ENCODE measurements at regions of chr9 and their contacts with region 1.

Region 1: DNA sequence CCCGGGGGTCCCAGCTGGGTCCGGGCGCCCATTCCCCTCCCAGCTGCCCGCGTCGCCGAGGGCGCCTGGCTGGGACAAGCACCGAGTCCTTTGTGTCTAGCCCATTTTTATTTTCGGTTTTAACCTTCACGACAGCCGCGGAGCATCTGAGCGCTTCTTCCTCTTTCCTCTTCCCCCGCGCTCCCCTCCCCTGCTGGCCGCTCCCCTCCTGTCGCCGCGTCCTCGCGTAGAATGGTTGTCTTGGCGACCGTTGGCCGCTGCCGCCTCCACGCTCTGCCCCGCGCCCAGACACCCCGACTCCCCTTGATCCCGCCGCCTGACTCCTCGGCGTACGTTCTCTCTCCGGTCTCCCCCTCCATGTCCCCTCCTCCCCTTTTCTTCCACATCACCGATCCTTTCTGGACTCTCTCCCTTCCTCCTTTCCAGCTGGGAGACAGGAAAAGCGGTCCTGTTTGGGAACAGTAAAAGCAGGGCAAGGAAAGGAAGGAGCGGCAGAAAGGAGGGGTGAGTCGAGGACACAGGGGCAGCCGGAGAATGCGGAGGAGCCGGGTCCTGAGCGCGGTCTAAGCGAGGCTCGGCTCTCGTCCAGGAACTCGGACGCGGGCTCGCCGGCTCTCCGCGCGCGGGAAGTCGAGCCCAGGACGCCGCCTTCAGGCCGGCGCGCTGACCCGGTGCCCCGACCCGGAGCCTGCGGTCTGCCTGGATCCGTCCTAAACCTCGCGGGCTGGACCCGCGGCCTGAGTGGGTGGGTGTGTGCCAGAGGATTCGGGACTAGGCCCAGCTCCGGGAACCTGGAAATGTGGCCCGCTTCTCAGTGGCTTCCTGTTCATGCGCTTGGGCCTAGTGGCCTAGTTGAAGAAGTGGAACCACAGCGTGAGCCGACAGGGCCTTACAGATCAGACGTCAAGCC is 841 bp downstream of the CDKN2B-AS1 start:
- DNase-seq: peak; percentile 72
- H3K4me3 Mint-ChIP-seq: peak overlapping the region; percentile 94
- H3K27ac Mint-ChIP-seq: peak overlapping the region; percentile 97
- H3K4me1 Mint-ChIP-seq: peaks cover 17% of the 10 kb centered on the region
- H3K27me3 Mint-ChIP-seq: no peaks in the 10 kb centered on the region
- CTCF ChIP-seq: no peak

Region 2: GRCh38 chr9:21559424-21560280 is 435.8 kb before region 1 on chr9:
- CTCF ChIA-PET with region 1: no interaction called
- intact Hi-C with region 1: loop called (anchors 5 kb)
- DNase-seq: peak; percentile 88
- H3K4me3 Mint-ChIP-seq: peak overlapping the region; percentile 85
- H3K27ac Mint-ChIP-seq: peak overlapping the region; percentile 98
- H3K4me1 Mint-ChIP-seq: peaks cover 10% of the 10 kb centered on the region
- H3K27me3 Mint-ChIP-seq: no peaks in the 10 kb centered on the region
- CTCF ChIP-seq: no peak

Region 3: DNA sequence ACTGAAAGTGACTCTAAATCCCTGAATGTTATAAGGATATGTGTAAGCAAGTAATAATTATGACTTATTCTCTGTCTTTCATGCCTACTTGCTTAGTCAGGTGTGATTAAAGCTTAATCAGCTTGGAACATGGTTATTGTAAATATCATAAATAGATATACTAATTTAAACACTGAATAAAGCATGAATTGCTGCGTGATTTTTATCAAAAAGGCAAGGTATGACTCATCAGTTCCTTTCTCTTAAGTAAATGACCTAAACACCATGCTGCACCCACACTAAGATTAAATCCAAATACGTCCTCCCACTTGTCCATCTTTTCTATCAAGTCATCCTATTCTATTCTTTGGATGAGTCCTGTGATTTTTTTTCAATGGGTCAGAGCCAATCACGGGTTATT is 317.6 kb before region 1 on chr9:
- CTCF ChIA-PET with region 1: no interaction called
- intact Hi-C with region 1: loop called (anchors 5 kb)
- DNase-seq: no peak
- H3K4me3 Mint-ChIP-seq: no peak overlapping the region
- H3K27ac Mint-ChIP-seq: peak overlapping the region; percentile 95
- H3K4me1 Mint-ChIP-seq: peaks cover 34% of the 10 kb centered on the region
- H3K27me3 Mint-ChIP-seq: no peaks in the 10 kb centered on the region
- CTCF ChIP-seq: no peak

Region 4: GRCh38 chr9:22008736-22009562 is 13.5 kb after region 1 on chr9 and contains the start of gene CDKN2B:
- CTCF ChIA-PET with region 1: interaction called, 11 read pairs
- intact Hi-C with region 1: no loop called
- DNase-seq: peak; percentile 96
- H3K4me3 Mint-ChIP-seq: peak within 1 kb of the TSS; percentile 96
- H3K27ac Mint-ChIP-seq: peak within 1 kb of the TSS; percentile 53
- H3K4me1 Mint-ChIP-seq: peaks cover 16% of the 10 kb centered on the region
- H3K27me3 Mint-ChIP-seq: no peaks in the 10 kb centered on the region
- CTCF ChIP-seq: peak; percentile 91
- total RNA-seq, gene CDKN2B: 30.4 and 35.2 TPM in 2 replicates

Region 5: DNA sequence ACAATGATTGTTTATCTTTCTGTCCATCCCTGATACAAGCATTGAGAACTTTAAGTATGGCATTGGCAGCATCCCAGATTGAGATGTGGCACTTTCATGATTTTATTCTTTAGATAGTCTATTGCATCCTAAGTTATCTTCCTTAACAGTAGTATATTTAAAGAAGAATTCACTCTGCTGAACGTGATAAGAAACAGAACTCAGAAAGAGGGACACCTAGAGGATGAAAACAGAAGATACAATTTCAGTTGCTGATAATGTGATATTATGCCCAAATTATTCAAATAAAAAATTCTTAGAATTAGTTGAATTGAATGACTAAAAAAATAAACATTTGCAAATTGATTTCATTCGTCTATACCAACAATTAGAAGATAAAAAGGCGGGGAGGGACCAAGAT is 233.1 kb after region 1 on chr9:
- CTCF ChIA-PET with region 1: no interaction called
- intact Hi-C with region 1: no loop called
- DNase-seq: no peak
- H3K4me3 Mint-ChIP-seq: no peak overlapping the region
- H3K27ac Mint-ChIP-seq: no peak overlapping the region
- H3K4me1 Mint-ChIP-seq: peaks cover 9% of the 10 kb centered on the region
- H3K27me3 Mint-ChIP-seq: no peaks in the 10 kb centered on the region
- CTCF ChIP-seq: no peak

Measured in Calu3 (cell line).